ENCODE measurements at regions of chr14 and their contacts with region 1.

Region 1: GRCh38 chr14:22386924-22387775 is 201.9 kb downstream of the DAD1 start:
- DNase-seq: peak; percentile 79
- CTCF ChIP-seq: peak; percentile 76

Region 2: GRCh38 chr14:22375321-22375930 is 11.7 kb before region 1 on chr14:
- CTCF ChIA-PET with region 1: interaction called, 29 read pairs
- POLR2A ChIA-PET with region 1: interaction called, 3 read pairs
- DNase-seq: peak; percentile 24
- CTCF ChIP-seq: peak; percentile 60

Region 3: GRCh38 chr14:22432348-22432976 is 45.3 kb after region 1 on chr14:
- CTCF ChIA-PET with region 1: interaction called, 11 read pairs
- POLR2A ChIA-PET with region 1: no interaction called
- DNase-seq: no peak
- CTCF ChIP-seq: no peak

Region 4: DNA sequence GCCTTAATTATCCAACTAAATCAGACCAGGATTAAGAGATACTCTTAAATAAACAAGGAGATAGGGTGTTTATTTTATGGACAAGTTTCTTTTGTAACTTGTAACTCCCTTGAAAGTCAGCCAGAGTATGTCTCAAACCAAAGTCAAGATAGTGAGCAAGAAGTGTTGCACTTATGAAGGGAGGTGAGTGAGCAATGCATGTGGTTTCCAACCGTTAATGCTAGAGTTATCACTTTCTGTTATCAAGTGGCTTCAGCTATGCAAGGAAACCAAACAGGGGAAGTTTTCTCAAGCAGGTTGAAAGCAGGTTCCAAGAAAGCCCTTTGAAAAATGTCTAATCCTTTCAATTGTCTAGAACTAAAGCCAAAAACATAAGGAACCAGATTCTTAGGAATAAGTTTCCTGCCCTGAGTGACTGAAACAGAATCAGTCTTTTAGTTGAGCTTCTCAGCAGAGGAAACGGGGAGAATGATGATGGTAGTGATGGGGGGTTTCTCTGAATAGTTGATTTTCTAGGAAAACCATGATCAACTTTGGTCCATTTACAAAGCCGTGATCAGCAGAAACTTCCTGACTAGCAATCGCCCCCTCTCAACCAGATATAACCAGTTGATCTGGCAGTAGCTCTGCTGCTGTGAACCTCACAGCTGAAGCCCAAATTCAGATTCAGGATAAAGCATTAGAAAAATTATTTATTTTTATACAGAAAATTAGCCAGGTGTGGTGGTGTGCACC is 73.5 kb after region 1 on chr14:
- CTCF ChIA-PET with region 1: interaction called, 58 read pairs
- POLR2A ChIA-PET with region 1: no interaction called
- DNase-seq: peak; percentile 37
- CTCF ChIP-seq: no peak

Region 5: DNA sequence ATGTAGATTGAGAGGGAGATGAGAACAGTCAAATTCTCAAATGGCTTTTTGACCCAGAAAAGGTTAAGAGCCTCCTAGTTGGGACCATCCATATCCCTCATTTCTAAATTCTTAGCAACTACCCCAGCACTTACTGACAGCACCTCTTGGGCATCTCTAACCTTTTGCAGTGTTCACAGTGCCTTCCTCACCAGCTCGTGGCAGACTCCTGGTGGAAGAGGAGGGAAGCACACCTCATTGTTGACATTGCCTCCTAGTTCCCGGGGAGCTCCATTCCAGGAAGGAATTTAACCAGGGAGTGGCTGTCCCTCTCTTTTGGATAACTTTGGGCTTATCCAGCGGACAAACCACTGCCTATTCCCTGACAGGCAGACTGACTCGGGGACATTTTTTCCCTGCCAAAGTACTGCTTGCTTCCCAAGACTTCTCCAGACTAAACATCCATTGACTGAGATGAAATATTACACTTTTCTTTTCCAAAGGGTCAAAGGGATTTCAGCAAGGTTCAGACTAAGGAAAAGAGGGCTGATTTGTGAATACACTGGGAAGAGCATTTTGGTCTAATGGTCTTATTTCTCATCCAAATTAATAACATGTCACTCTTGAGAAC is 266.0 kb after region 1 on chr14:
- CTCF ChIA-PET with region 1: interaction called, 14 read pairs
- POLR2A ChIA-PET with region 1: no interaction called
- DNase-seq: peak; percentile 68
- CTCF ChIP-seq: peak; percentile 81